Activated T-helper 1 cell treated with anti-CD3 and anti-CD28 coated beads, Interleukin-12 subunit alpha, Interleukin-12 subunit beta, Interleukin-2, Interleukin-4 antibody, amounts not matched to agents 30 ng/mL and 10 ng/mL and 1 ng/mL, durations not matched to agents 14 hours and 24 hours and 36 hours (primary cell): ENCODE measurements at regions of chr14 and their contacts with region 1.

Region 1: GRCh38 chr14:61456720-61457119 is 135.3 kb downstream of the PRKCH start:
- DNase-seq: peak; percentile 69
- H3K4me3 Mint-ChIP-seq: no peak overlapping the region
- H3K27ac Mint-ChIP-seq: peak overlapping the region; percentile 71
- H3K4me1 Mint-ChIP-seq: peaks cover 71% of the 10 kb centered on the region
- H3K27me3 Mint-ChIP-seq: no peaks in the 10 kb centered on the region

Region 2: DNA sequence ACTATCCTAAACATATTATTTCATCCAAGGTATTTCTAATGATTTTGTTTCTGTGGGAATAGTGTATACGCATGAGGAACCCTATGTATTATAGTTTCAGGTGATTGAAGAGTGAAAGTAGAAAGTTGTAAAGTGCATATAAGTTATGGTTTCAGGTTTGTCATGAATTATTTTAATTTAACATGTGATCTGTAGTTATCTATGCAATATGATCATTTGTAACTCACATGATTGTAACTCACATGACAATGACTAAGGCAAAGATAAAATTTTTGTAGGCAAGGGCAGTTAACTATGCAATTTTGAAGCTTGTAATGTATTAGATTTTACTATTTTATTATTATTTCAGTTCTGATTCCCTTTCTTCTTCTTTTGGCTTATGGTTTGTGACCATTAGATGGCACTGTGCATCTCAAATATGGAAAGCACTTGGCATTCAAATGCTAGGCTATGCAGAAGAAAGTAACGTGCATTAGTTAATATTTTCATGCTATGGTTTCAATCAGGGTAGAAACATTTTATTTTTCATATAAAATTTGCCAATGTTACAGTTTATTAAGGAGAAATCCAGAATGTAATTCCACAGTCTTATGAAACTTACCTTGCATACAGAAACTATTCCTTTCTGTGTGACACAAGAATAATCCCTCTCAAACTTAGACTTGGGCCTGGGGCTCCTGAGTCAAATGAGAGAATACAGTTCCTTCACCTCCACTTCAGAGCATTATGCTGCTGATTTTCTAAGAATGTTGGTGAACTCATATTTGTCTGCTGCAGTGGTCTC is 159.8 kb before region 1 on chr14:
- intact Hi-C with region 1: loop called (anchors 1 kb)
- DNase-seq: no peak
- H3K4me3 Mint-ChIP-seq: no peak overlapping the region
- H3K27ac Mint-ChIP-seq: no peak overlapping the region
- H3K4me1 Mint-ChIP-seq: peaks cover 35% of the 10 kb centered on the region
- H3K27me3 Mint-ChIP-seq: no peaks in the 10 kb centered on the region

Region 3: GRCh38 chr14:61342486-61342885 is 114.2 kb before region 1 on chr14:
- intact Hi-C with region 1: loop called (anchors 1 kb)
- DNase-seq: peak; percentile 85
- H3K4me3 Mint-ChIP-seq: peak overlapping the region; percentile 82
- H3K27ac Mint-ChIP-seq: peak overlapping the region; percentile 97
- H3K4me1 Mint-ChIP-seq: peaks cover 92% of the 10 kb centered on the region
- H3K27me3 Mint-ChIP-seq: no peaks in the 10 kb centered on the region

Region 4: GRCh38 chr14:61388173-61388975 is 68.3 kb before region 1 on chr14:
- intact Hi-C with region 1: loop called (anchors 1 kb)
- DNase-seq: no peak
- H3K4me3 Mint-ChIP-seq: no peak overlapping the region
- H3K27ac Mint-ChIP-seq: no peak overlapping the region
- H3K4me1 Mint-ChIP-seq: peaks cover 13% of the 10 kb centered on the region
- H3K27me3 Mint-ChIP-seq: no peaks in the 10 kb centered on the region

Region 5: DNA sequence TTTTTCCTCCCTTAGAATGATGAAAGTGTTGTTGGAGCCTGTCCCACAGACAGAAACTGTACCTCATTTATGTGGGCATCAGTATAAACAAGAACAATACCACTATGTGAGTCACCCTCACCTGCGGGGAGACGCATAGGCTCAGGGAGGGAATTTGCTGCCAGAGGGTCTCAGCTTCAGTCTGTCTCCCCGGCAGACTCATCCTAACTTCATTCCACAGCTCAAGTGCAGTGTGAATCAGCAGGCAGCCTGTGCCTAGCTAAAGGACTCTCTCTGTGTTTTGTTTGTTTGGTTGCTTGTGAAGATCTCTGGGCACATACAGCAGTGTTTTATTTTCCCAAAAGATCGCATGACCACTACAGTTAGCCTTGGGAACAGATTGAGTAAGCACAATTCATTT is 36.4 kb before region 1 on chr14:
- intact Hi-C with region 1: loop called (anchors 2 kb)
- DNase-seq: no peak
- H3K4me3 Mint-ChIP-seq: peak overlapping the region; percentile 54
- H3K27ac Mint-ChIP-seq: peak overlapping the region; percentile 83
- H3K4me1 Mint-ChIP-seq: peaks cover 20% of the 10 kb centered on the region
- H3K27me3 Mint-ChIP-seq: no peaks in the 10 kb centered on the region

Region 6: GRCh38 chr14:61444215-61444768 is 12.4 kb before region 1 on chr14:
- intact Hi-C with region 1: loop called (anchors 1 kb)
- DNase-seq: peak; percentile 61
- H3K4me3 Mint-ChIP-seq: peak overlapping the region; percentile 67
- H3K27ac Mint-ChIP-seq: peak overlapping the region; percentile 82
- H3K4me1 Mint-ChIP-seq: peaks cover 91% of the 10 kb centered on the region
- H3K27me3 Mint-ChIP-seq: no peaks in the 10 kb centered on the region

Region 7: GRCh38 chr14:61822458-61822857 is 365.7 kb after region 1 on chr14:
- intact Hi-C with region 1: no loop called
- DNase-seq: no peak
- H3K4me3 Mint-ChIP-seq: no peak overlapping the region
- H3K27ac Mint-ChIP-seq: no peak overlapping the region
- H3K4me1 Mint-ChIP-seq: peaks cover 5% of the 10 kb centered on the region
- H3K27me3 Mint-ChIP-seq: peaks cover 13% of the 10 kb centered on the region

Region 8: GRCh38 chr14:63276492-63277342 is 1820.0 kb after region 1 on chr14:
- intact Hi-C with region 1: loop called (anchors 5 kb)
- DNase-seq: no peak
- H3K4me3 Mint-ChIP-seq: no peak overlapping the region
- H3K27ac Mint-ChIP-seq: no peak overlapping the region
- H3K4me1 Mint-ChIP-seq: no peaks in the 10 kb centered on the region
- H3K27me3 Mint-ChIP-seq: peaks cover 4% of the 10 kb centered on the region